A549 (cell line): ENCODE measurements at regions of chr19 and their contacts with region 1.

Region 1: GRCh38 chr19:506404-507285 is 652 bp upstream of the TPGS1 start:
- DNase-seq: peak; percentile 95 to 99
- ATAC-seq: peak; percentile 81 to 87
- H3K4me3 ChIP-seq: peak overlapping the region; percentile 99
- H3K27ac ChIP-seq: peak overlapping the region; percentile 99 to 100
- H3K4me1 ChIP-seq: peaks cover 4% of the 10 kb centered on the region; the same call in 1 of the 3 replicates
- CTCF ChIP-seq: peak; percentile 69
- EP300 ChIP-seq: no peak
- POLR2A ChIP-seq: peak; percentile 6; the same call in 1 of the 2 replicates
- RAD21 ChIP-seq: peak; percentile 50 to 57

Region 2: GRCh38 chr19:495402-496186 is 11.1 kb before region 1 on chr19:
- CTCF ChIA-PET with region 1: interaction called, 17 read pairs
- POLR2A ChIA-PET with region 1: interaction called, 3 read pairs
- DNase-seq: peak; percentile 49 to 86
- ATAC-seq: peak; percentile 54 to 79; a peak in 5 of 6 replicates
- H3K4me3 ChIP-seq: no peak overlapping the region
- H3K27ac ChIP-seq: peak overlapping the region in 1 of 2 experiments; percentile 60; a peak in 2 of 6 replicates
- H3K4me1 ChIP-seq: peaks cover 5% of the 10 kb centered on the region; the same call in 1 of the 3 replicates
- CTCF ChIP-seq: peak; percentile 49
- EP300 ChIP-seq: no peak
- POLR2A ChIP-seq: no peak
- RAD21 ChIP-seq: peak; percentile 21 to 31; a peak in 3 of 5 replicates

Region 3: GRCh38 chr19:524062-524674 is 17.5 kb after region 1 on chr19:
- CTCF ChIA-PET with region 1: interaction called, 42 read pairs
- POLR2A ChIA-PET with region 1: interaction called, 3 read pairs
- DNase-seq: no peak
- ATAC-seq: peak; percentile 70 to 71
- H3K4me3 ChIP-seq: no peak overlapping the region
- H3K27ac ChIP-seq: peak overlapping the region in 1 of 2 experiments; percentile 79; a peak in 3 of 6 replicates
- H3K4me1 ChIP-seq: peaks cover 11% of the 10 kb centered on the region; the same call in 1 of the 3 replicates
- CTCF ChIP-seq: no peak
- EP300 ChIP-seq: no peak
- POLR2A ChIP-seq: no peak
- RAD21 ChIP-seq: no peak

Region 4: GRCh38 chr19:531009-531752 is 24.5 kb after region 1 on chr19:
- CTCF ChIA-PET with region 1: interaction called, 16 read pairs
- POLR2A ChIA-PET with region 1: interaction called, 5 read pairs
- DNase-seq: peak; percentile 79 to 82
- ATAC-seq: peak; percentile 60 to 77
- H3K4me3 ChIP-seq: peak overlapping the region; percentile 87
- H3K27ac ChIP-seq: peak overlapping the region; percentile 98 to 100
- H3K4me1 ChIP-seq: peaks cover 34% of the 10 kb centered on the region
- CTCF ChIP-seq: no peak
- EP300 ChIP-seq: no peak
- POLR2A ChIP-seq: peak; percentile 32
- RAD21 ChIP-seq: no peak

Region 5: DNA sequence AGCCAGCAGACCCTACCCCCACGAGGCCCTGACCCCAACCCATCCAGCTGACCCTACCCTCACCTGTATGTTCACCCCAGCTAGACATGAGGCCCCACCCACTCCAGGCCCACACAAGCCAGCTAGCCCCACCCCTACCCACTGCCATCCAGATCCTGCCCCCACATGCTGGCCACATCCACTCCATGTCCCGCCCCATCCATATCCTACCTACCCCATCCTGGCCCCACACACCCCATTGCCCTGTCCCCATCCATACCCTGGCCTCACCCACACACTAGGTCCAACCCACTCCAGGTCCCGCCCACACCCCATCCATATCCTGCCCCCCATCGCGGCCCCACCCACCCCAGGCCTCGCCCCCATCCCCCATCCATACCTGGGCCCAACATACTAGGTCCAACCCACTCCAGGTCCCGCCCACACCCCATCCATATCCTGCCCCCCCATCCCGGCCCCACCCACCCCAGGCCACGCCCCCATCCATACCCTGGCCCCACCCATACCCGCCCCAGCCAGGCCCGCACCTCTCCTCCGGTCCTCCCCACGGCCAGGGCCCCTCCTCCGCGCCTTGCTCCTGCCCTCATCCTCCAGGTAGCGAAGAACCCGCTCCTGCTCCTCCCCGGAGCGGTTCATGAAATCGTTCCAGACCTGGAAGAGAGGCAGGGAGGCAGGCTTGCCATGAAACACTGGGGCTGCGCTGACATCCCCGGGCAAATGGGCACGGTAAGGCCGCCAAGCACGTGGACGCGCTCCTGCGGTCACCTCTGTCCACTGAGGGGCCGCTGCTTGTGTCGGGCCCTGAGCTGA is 393.9 kb after region 1 on chr19:
- CTCF ChIA-PET with region 1: no interaction called
- POLR2A ChIA-PET with region 1: no interaction called
- DNase-seq: peak; percentile 34 to 62
- ATAC-seq: peak; percentile 63 to 85
- H3K4me3 ChIP-seq: no peak overlapping the region
- H3K27ac ChIP-seq: peak overlapping the region in 1 of 2 experiments; percentile 20; a peak in 1 of 6 replicates
- H3K4me1 ChIP-seq: peaks cover 5% of the 10 kb centered on the region; the same call in 1 of the 3 replicates
- CTCF ChIP-seq: no peak
- EP300 ChIP-seq: no peak
- POLR2A ChIP-seq: no peak
- RAD21 ChIP-seq: no peak